Activated CD4-positive, alpha-beta T cell treated with anti-CD3 and anti-CD28 coated beads for 36 hours (primary cell): ENCODE measurements at regions of chrX and their contacts with region 1.

Region 1: GRCh38 chrX:13411496-13412207 is 91.8 kb upstream of the ATXN3L start:
- DNase-seq: no peak
- ATAC-seq: no peak
- H3K4me3 Mint-ChIP-seq: no peak overlapping the region
- H3K27ac Mint-ChIP-seq: no peak overlapping the region
- H3K4me1 Mint-ChIP-seq: no peaks in the 10 kb centered on the region
- H3K27me3 Mint-ChIP-seq: no peaks in the 10 kb centered on the region

Region 2: GRCh38 chrX:12567857-12568256 is 843.8 kb before region 1 on chrX:
- CTCF ChIA-PET with region 1: no interaction called
- POLR2A ChIA-PET with region 1: no interaction called
- intact Hi-C with region 1: loop called in 1 of 2 experiments (anchors 5 kb)
- DNase-seq: no peak
- ATAC-seq: no peak
- H3K4me3 Mint-ChIP-seq: no peak overlapping the region
- H3K27ac Mint-ChIP-seq: no peak overlapping the region
- H3K4me1 Mint-ChIP-seq: no peaks in the 10 kb centered on the region
- H3K27me3 Mint-ChIP-seq: no peaks in the 10 kb centered on the region

Region 3: GRCh38 chrX:13369256-13370030 is 42.2 kb before region 1 on chrX:
- CTCF ChIA-PET with region 1: no interaction called
- POLR2A ChIA-PET with region 1: no interaction called
- intact Hi-C with region 1: no loop called
- DNase-seq: no peak
- ATAC-seq: no peak
- H3K4me3 Mint-ChIP-seq: no peak overlapping the region
- H3K27ac Mint-ChIP-seq: no peak overlapping the region
- H3K4me1 Mint-ChIP-seq: peaks cover 13% of the 10 kb centered on the region
- H3K27me3 Mint-ChIP-seq: no peaks in the 10 kb centered on the region

Region 4: GRCh38 chrX:13699183-13699826 is 287.7 kb after region 1 on chrX:
- CTCF ChIA-PET with region 1: no interaction called
- POLR2A ChIA-PET with region 1: no interaction called
- intact Hi-C with region 1: no loop called
- DNase-seq: peak; percentile 14
- ATAC-seq: peak; percentile 45
- H3K4me3 Mint-ChIP-seq: no peak overlapping the region
- H3K27ac Mint-ChIP-seq: no peak overlapping the region
- H3K4me1 Mint-ChIP-seq: peaks cover 74% of the 10 kb centered on the region
- H3K27me3 Mint-ChIP-seq: no peaks in the 10 kb centered on the region